PC-9 (cell line): ENCODE measurements at regions of chr6 and their contacts with region 1.

Region 1: GRCh38 chr6:10048370-10049298 is 366.2 kb downstream of the TFAP2A start:
- DNase-seq: peak; percentile 15 to 36
- H3K4me3 ChIP-seq: no peak overlapping the region
- H3K27ac ChIP-seq: no peak overlapping the region
- H3K4me1 ChIP-seq: no peaks in the 10 kb centered on the region
- H3K27me3 ChIP-seq: no peaks in the 10 kb centered on the region
- CTCF ChIP-seq: no peak

Region 2: DNA sequence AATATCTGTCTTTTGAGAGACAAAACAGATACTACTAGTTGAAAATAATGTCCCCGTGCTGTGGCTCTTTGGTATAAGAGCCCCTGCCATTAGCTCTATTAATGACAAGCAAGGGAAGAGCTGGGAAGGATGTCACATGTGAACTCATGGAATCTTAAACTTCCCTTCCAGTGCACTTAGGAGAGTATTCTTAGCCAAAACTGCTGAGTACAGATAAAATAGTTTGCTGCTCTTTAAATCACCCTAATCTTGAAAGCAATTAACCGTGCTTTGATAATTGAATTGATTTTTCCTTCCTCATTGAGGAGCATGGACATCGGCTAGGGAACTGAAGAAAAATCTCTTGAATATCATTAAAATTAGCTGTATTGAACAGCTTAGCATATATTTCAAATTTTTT is 1705.0 kb before region 1 on chr6:
- CTCF ChIA-PET with region 1: no interaction called
- POLR2A ChIA-PET with region 1: interaction called, 10 read pairs
- intact Hi-C with region 1: no loop called
- DNase-seq: no peak
- H3K4me3 ChIP-seq: no peak overlapping the region
- H3K27ac ChIP-seq: no peak overlapping the region
- H3K4me1 ChIP-seq: no peaks in the 10 kb centered on the region
- H3K27me3 ChIP-seq: no peaks in the 10 kb centered on the region
- CTCF ChIP-seq: no peak